Activated CD4-positive, alpha-beta memory T cell treated with anti-CD3 and anti-CD28 coated beads for 36 hours (primary cell): ENCODE measurements at regions of chr22 and their contacts with region 1.

Region 1: DNA sequence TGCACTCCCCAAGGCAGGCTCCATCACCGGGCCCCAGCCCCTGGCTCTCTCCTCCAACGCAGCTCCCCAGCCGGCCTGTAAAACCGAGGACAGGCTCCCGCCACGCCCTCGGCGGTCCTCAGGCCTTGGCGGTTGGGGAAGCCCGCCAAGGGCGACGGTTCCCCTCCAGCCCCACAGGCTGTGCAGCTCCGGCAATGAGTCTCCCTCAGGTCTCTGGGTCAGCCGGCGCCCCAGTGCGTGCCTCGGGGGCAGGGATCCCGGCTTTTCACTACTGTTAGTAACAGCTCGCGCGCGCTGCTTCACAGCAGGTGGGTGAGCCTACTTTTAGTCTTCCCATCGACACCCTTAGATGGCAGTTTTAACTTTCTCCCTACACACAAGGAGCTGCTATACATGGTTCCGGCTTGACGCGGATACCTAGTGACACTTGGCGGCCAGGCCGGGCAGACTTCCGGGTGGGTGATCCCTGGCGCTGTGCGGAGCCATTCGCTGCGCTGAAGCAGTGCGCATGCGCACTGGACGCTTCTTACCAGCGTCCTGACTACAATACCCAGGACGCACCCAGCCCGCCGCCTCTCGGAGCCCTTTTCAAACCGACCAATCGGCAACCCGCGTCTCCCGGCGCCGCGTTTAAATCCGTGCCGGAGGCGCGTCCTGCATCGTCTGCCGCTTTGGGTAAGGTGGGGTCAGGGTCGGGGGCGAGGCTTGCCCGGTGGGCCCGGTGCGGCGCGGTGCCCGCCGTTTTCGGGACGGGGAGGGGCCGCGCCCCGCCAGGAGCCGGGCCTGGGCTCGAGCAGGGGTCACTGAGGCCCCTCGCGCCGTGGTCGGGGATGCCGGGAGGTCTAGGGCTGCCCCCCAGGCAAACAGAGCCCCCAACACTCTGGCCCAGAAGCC is at the start of gene GTSE1:
- DNase-seq: peak; percentile 99
- H3K4me3 Mint-ChIP-seq: peak within 1 kb of the TSS; percentile 77
- H3K27ac Mint-ChIP-seq: peak within 1 kb of the TSS; percentile 90
- H3K4me1 Mint-ChIP-seq: peaks cover 29% of the 10 kb centered on the region
- H3K27me3 Mint-ChIP-seq: no peaks in the 10 kb centered on the region
- total RNA-seq, gene GTSE1: 39.9 to 42.6 TPM

Region 2: DNA sequence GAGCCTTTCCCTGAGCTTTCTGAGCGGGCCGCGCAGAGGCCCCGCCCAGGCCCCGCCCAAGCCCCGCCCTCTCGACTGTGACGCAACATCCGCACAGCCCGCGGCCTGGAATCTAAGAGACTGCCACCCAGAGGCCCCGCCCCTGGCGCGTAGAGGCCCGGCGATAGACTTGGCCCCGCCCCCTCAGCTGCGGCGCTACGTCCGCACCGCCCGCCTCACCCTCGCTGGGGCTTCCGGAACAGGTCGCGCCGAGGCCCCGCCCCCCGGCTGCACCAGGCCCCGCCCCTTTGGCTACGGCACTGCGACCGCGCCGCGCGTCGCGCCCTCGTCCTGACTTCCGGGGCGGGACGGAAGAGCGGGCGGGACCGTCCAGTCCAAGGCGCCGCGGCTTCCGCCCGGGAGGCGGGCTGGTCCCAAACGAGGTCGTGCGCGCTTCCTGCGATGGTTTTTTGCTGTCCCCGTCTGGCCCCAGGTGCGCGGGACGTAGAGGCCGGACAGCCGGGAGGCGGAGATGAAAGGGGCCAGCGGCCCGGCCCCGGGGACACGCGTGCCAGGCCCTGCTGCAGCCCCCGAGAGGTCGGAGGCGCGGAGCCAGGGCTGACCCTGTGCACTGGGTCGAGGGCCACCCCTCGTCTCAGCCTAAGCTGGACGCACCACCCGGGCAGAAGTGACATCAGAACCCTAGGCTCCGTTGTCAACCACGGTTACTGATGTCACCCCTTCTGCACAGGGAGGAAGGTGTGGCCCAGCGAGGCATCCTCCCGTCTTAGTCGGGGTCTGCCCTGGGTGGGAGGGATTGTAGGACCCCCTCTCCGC is 260.6 kb before region 1 on chr22:
- CTCF ChIA-PET with region 1: interaction called, 6 read pairs
- POLR2A ChIA-PET with region 1: no interaction called
- intact Hi-C with region 1: loop called (anchors 10 kb)
- DNase-seq: peak; percentile 100
- H3K4me3 Mint-ChIP-seq: peak overlapping the region; percentile 83
- H3K27ac Mint-ChIP-seq: peak overlapping the region; percentile 86
- H3K4me1 Mint-ChIP-seq: peaks cover 12% of the 10 kb centered on the region
- H3K27me3 Mint-ChIP-seq: no peaks in the 10 kb centered on the region

Region 3: GRCh38 chr22:46122511-46122971 is 174.0 kb before region 1 on chr22:
- CTCF ChIA-PET with region 1: interaction called, 19 read pairs
- POLR2A ChIA-PET with region 1: no interaction called
- intact Hi-C with region 1: loop called (anchors 1 kb)
- DNase-seq: peak; percentile 79
- H3K4me3 Mint-ChIP-seq: no peak overlapping the region
- H3K27ac Mint-ChIP-seq: no peak overlapping the region
- H3K4me1 Mint-ChIP-seq: no peaks in the 10 kb centered on the region
- H3K27me3 Mint-ChIP-seq: no peaks in the 10 kb centered on the region

Region 4: DNA sequence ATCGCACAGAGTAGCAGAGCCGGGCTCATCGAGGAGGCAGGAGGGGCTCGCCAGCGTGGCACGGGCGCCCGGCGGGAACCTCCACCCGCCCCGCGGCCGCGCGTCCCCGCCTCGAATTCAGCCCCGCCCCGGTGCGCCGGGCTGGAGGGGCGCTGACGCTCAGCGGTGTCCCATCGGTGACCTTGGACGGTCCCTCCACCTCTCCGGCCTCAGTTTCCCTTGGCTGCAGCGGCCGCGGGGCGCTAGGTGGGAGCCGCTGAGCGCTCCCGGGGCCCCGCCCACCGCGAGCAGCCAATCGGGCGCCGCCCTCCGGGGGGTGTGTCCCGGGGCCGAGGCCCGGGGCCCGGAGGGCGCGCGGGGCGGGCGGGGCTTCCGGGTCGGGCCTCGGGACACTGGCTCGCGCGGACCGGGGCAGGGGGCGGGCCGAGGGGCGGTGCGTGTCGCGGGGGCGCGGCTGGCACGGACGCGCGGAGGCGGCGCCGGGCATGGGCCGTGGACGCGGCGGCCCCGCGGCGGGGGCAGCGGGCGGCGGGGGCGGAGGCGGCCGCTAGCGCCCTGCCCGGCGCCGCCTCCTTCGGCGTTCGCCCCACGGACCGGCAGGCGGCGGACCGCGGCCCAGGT is 146.4 kb before region 1 on chr22 and contains the start of gene PPARA:
- CTCF ChIA-PET with region 1: interaction called, 4 read pairs
- POLR2A ChIA-PET with region 1: interaction called, 6 read pairs
- intact Hi-C with region 1: loop called (anchors 5 kb)
- DNase-seq: peak; percentile 87
- H3K4me3 Mint-ChIP-seq: peak within 1 kb of the TSS; percentile 74
- H3K27ac Mint-ChIP-seq: no peak within 1 kb of the TSS
- H3K4me1 Mint-ChIP-seq: peaks cover 16% of the 10 kb centered on the region
- H3K27me3 Mint-ChIP-seq: peaks cover 6% of the 10 kb centered on the region
- total RNA-seq, gene PPARA: 11.1 to 13.3 TPM

Region 5: DNA sequence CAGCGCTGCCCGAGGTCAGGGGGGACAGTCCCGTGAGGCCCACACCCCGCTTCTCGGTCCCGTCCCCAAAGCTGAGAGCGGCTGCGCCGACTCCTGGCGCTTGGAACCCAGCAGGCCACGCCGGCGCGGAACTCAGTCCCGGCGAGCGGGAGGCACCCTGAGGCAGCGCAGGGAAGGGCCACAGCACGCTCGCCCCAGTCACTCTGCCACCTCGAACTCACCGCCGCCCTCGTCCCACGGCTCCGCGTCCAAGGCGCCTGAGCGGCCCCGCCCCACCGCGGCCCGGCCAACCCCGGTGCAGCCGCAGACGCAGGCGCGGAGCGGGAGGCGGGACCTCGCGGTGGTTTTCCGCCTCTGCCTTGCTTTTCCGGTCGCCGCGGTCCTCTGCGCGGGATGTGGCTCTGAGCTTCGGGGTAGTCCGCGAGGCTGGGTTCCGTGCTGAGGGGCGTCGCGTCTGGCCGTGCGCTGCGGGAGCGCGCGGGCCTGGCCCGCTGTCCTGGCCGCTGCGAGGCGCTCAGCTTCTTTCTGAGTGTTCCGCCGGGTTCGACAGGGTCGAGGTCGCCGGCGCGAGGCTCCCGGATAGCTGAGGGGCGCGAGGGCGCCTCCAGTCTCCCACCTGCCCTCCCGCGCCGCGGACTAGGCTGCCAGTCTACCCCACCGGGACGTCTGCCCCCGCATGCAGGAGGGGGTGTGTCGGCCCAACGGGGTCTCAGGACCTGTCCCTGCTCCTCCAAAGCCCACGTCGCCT is 46.3 kb before region 1 on chr22 and contains the start of gene CDPF1:
- CTCF ChIA-PET with region 1: no interaction called
- POLR2A ChIA-PET with region 1: interaction called, 4 read pairs
- intact Hi-C with region 1: loop called (anchors 1 kb)
- DNase-seq: peak; percentile 93
- H3K4me3 Mint-ChIP-seq: peak within 1 kb of the TSS; percentile 68
- H3K27ac Mint-ChIP-seq: peak within 1 kb of the TSS; percentile 44
- H3K4me1 Mint-ChIP-seq: peaks cover 34% of the 10 kb centered on the region
- H3K27me3 Mint-ChIP-seq: no peaks in the 10 kb centered on the region
- total RNA-seq, gene CDPF1: 6.8 to 8.2 TPM

Region 6: DNA sequence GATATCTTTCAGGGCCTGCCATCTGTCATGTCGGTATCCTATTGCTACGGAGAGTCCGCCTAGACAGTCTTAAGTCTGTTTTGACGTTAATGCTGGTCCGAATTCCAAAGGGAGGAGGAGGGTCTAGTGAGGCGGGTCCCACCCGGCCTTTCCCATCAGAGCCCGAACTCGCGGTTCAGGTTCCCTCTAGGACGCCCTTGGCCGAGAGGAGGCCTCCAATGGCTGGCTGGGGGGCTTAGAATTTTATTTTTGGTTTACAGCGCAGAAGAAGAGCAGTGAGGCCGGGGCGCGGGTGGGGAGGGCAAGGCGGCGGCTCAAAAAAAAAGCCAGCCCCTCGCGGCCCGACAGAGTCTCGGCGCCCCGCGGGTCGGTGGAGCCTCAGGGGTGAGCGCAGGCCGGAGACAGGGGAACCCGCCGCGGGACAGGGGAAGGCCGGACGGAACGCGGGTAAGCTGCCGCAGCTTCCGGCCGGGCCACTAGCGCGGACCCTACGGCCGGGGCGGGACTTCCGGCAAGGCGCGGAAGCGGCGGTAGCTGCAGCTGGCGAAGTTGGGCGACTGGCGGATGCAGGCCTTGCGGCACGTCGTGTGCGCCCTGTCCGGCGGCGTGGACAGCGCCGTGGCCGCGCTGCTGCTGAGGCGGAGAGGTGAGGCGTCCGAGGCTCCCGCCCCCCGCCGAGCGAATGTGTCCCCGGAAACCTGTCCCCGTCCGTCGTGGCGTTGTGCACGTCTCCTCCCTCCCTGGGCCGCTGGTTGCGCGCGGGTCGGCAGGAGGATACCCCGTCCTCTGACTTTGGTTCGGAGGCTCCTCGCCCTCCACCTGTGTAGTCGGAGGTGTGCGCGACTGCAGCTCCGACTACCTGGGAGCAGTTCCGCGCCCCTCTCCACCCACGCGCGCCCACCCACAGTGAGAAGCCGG is 39.0 kb after region 1 on chr22 and contains the start of gene TRMU:
- CTCF ChIA-PET with region 1: no interaction called
- POLR2A ChIA-PET with region 1: no interaction called
- intact Hi-C with region 1: loop called (anchors 2 kb)
- DNase-seq: peak; percentile 82
- H3K4me3 Mint-ChIP-seq: peak within 1 kb of the TSS; percentile 98
- H3K27ac Mint-ChIP-seq: peak within 1 kb of the TSS; percentile 86
- H3K4me1 Mint-ChIP-seq: peaks cover 37% of the 10 kb centered on the region
- H3K27me3 Mint-ChIP-seq: no peaks in the 10 kb centered on the region
- total RNA-seq, gene TRMU: 61.3 to 63.2 TPM